ENCODE measurements at regions of chr2 and their contacts with region 1.

Region 1: GRCh38 chr2:69933839-69934613 is 19.1 kb downstream of the MXD1 start:
- DNase-seq: peak in 6 of 7 donors; percentile 37 to 60 (median 54)
- H3K4me3 ChIP-seq: no peak overlapping the region
- H3K27ac ChIP-seq: peak overlapping the region in 2 of 5 donors; percentile 38 to 71
- H3K4me1 ChIP-seq: peaks cover 8 to 14% of the 10 kb centered on the region in 2 donors
- H3K27me3 ChIP-seq: no peaks in the 10 kb centered on the region
- CTCF ChIP-seq: no peak
- POLR2A ChIP-seq: no peak

Region 2: GRCh38 chr2:70043252-70043875 is 109.3 kb after region 1 on chr2:
- intact Hi-C with region 1: loop called in 1 of 2 experiments (anchors 10 kb)
- DNase-seq: peak in 4 of 7 donors; percentile 36 to 56 (median 44)
- H3K4me3 ChIP-seq: no peak overlapping the region
- H3K27ac ChIP-seq: peak overlapping the region in 2 of 5 donors; percentile 19 to 55
- H3K4me1 ChIP-seq: peaks cover 0 to 18% of the 10 kb centered on the region in 2 donors
- H3K27me3 ChIP-seq: no peaks in the 10 kb centered on the region
- CTCF ChIP-seq: no peak
- POLR2A ChIP-seq: no peak

Measured in adrenal gland (tissue), 19 donors.